ENCODE measurements at regions of chr7 and their contacts with region 1.

Region 1: GRCh38 chr7:23055582-23056178 is 41.8 kb upstream of the HYCC1 start:
- DNase-seq: peak in 1 of 2 donors; percentile 83
- ATAC-seq: peak; percentile 89 to 95 (median 94)
- H3K4me3 ChIP-seq: no peak overlapping the region
- H3K4me3 Mint-ChIP-seq: no peak overlapping the region
- H3K27ac ChIP-seq: no peak overlapping the region
- H3K27ac Mint-ChIP-seq: no peak overlapping the region
- H3K4me1 ChIP-seq: no peaks in the 10 kb centered on the region
- H3K4me1 Mint-ChIP-seq: no peaks in the 10 kb centered on the region
- H3K27me3 ChIP-seq: no peaks in the 10 kb centered on the region
- H3K27me3 Mint-ChIP-seq: peaks cover 6 to 8% of the 10 kb centered on the region in 2 donors
- CTCF ChIP-seq: peak; percentile 95

Region 2: DNA sequence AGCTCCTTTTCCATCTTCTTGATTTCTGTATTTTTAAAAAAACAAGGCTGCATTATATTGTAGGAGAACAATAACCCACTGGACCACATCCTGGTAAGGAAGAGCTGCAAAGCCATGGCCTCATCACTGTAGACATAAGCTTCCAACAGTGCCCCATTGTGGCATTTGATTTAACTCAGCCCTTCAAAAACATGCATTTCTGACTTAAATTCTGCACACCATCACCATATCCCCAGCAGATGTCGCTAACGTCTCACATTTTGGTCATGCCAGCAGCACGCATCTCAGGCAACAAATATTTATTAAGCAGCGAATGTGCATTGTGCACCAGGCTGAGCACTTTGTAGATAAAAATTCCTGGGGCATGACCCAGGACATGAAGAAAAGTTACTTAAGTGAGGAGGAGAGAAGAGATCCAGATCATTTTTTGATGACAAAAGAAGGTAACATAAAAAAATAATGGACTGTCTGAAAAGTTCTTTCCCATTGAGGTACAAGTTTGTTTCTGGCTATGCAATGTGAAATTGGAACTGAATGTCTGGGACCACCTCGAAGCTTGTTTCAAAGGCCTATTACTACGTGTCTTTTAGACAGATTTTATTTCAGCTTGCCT is 945.3 kb before region 1 on chr7:
- intact Hi-C with region 1: loop called (anchors 5 kb)
- DNase-seq: peak; percentile 50 to 88
- ATAC-seq: peak; percentile 80 to 89 (median 82)
- H3K4me3 ChIP-seq: no peak overlapping the region
- H3K4me3 Mint-ChIP-seq: no peak overlapping the region
- H3K27ac ChIP-seq: no peak overlapping the region
- H3K27ac Mint-ChIP-seq: no peak overlapping the region
- H3K4me1 ChIP-seq: no peaks in the 10 kb centered on the region
- H3K4me1 Mint-ChIP-seq: no peaks in the 10 kb centered on the region
- H3K27me3 ChIP-seq: no peaks in the 10 kb centered on the region
- H3K27me3 Mint-ChIP-seq: peaks cover 0 to 9% of the 10 kb centered on the region in 2 donors
- CTCF ChIP-seq: peak; percentile 81

Region 3: GRCh38 chr7:22549667-22550513 is 505.8 kb before region 1 on chr7:
- intact Hi-C with region 1: loop called (anchors 1 kb)
- DNase-seq: peak in 1 of 2 donors; percentile 66
- ATAC-seq: peak in 2 of 3 donors; percentile 41 to 65
- H3K4me3 ChIP-seq: no peak overlapping the region
- H3K4me3 Mint-ChIP-seq: peak overlapping the region; percentile 35
- H3K27ac ChIP-seq: no peak overlapping the region
- H3K27ac Mint-ChIP-seq: no peak overlapping the region
- H3K4me1 ChIP-seq: peaks cover 9% of the 10 kb centered on the region
- H3K4me1 Mint-ChIP-seq: peaks cover 6 to 12% of the 10 kb centered on the region in 2 donors
- H3K27me3 ChIP-seq: peaks cover 18% of the 10 kb centered on the region
- H3K27me3 Mint-ChIP-seq: peaks cover 40 to 66% of the 10 kb centered on the region in 2 donors
- CTCF ChIP-seq: peak; percentile 42

Region 4: DNA sequence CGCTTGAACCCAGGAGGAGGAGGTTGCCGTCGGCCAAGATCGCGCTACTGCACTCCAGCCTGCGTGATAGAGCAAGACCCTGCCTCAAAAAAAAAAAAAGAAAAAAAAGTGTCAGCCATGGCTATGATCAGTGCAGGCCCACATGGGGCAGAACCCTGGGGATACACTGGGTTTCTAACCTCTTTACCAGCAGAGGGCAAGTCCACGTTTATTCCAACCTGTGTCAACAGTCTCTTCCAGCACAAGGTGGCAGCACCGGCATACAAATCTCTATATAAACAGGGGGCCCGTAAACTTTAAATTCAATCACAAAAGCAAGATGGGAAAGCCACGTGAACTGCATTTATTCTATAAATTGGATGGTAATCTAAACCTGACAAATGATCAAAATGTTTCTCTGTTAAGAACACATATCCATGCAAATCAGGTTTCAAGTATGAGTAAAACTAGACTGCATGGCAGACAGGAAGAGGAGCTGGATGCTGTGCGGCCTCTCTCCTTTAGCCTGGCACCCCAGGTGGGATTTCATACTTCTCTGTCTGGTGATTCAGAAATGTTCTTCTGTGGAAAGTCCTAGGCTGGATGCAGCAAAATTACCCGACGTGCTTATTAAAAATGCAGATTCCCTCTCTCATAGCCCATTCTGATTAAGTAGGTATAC is 495.7 kb before region 1 on chr7:
- intact Hi-C with region 1: loop called (anchors 1 kb)
- DNase-seq: peak; percentile 23 to 82
- ATAC-seq: peak; percentile 75 to 86 (median 77)
- H3K4me3 ChIP-seq: no peak overlapping the region
- H3K4me3 Mint-ChIP-seq: no peak overlapping the region
- H3K27ac ChIP-seq: no peak overlapping the region
- H3K27ac Mint-ChIP-seq: no peak overlapping the region
- H3K4me1 ChIP-seq: peaks cover 16% of the 10 kb centered on the region
- H3K4me1 Mint-ChIP-seq: peaks cover 0 to 4% of the 10 kb centered on the region in 2 donors
- H3K27me3 ChIP-seq: peaks cover 12% of the 10 kb centered on the region
- H3K27me3 Mint-ChIP-seq: peaks cover 8 to 23% of the 10 kb centered on the region in 2 donors
- CTCF ChIP-seq: peak; percentile 70

Region 5: GRCh38 chr7:22782616-22783232 is 273.0 kb before region 1 on chr7:
- intact Hi-C with region 1: loop called (anchors 2 kb)
- DNase-seq: peak; percentile 43 to 80
- ATAC-seq: peak; percentile 64 to 89 (median 82)
- H3K4me3 ChIP-seq: no peak overlapping the region
- H3K4me3 Mint-ChIP-seq: no peak overlapping the region
- H3K27ac ChIP-seq: no peak overlapping the region
- H3K27ac Mint-ChIP-seq: no peak overlapping the region
- H3K4me1 ChIP-seq: no peaks in the 10 kb centered on the region
- H3K4me1 Mint-ChIP-seq: no peaks in the 10 kb centered on the region
- H3K27me3 ChIP-seq: no peaks in the 10 kb centered on the region
- H3K27me3 Mint-ChIP-seq: peaks cover 4 to 5% of the 10 kb centered on the region in 2 donors
- CTCF ChIP-seq: peak; percentile 77

Region 6: DNA sequence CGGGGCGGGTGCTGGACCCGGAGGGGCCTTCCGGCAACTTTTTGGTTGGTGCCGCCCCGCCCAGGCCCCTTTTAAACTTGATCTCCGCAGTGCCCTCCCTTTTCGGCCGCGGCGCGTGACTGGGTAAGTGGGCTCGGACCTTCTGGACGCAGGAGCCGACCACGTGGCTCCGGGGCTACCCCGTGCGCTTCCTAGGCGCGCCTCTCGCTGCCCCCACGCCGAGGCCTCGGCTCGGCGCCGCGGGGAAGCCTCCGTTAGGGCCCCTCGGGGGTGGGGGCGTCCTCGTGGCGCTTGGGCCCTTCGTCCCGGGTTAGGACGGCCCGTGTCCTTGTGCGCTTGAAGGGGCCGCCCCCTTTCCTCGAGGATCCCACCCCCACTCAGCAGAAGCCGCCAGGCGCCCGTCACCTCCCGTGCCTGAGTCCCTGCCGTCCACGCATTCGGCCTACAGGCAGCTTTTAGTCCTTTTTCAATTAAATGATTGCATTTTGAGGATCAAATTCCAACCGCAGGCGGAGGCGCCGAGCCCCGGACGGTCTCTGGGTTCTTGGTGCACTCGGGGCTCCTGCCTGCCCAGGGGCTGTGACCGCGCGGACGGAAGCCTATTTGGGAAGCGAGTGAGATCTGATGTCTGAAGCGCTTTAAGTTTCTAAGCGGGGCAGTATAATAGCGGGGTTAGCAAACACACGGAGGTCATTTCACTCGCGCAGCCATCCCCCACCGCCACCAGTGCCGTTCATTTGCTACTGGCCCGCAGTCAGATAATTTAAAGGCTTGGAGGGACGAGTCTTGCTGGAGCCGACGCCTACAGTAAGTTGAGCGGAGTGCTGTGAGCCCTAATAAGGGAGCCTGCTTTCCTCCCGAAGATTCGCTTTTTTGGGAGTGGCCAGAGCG is 201.3 kb before region 1 on chr7:
- intact Hi-C with region 1: loop called (anchors 1 kb)
- DNase-seq: peak; percentile 75 to 89
- ATAC-seq: peak; percentile 87 to 93 (median 88)
- H3K4me3 ChIP-seq: peak overlapping the region; percentile 62
- H3K4me3 Mint-ChIP-seq: peak overlapping the region; percentile 96
- H3K27ac ChIP-seq: peak overlapping the region; percentile 76
- H3K27ac Mint-ChIP-seq: peak overlapping the region; percentile 82 to 93
- H3K4me1 ChIP-seq: peaks cover 20% of the 10 kb centered on the region
- H3K4me1 Mint-ChIP-seq: peaks cover 16 to 20% of the 10 kb centered on the region in 2 donors
- H3K27me3 ChIP-seq: no peaks in the 10 kb centered on the region
- H3K27me3 Mint-ChIP-seq: no peaks in the 10 kb centered on the region
- CTCF ChIP-seq: peak; percentile 91

Region 7: DNA sequence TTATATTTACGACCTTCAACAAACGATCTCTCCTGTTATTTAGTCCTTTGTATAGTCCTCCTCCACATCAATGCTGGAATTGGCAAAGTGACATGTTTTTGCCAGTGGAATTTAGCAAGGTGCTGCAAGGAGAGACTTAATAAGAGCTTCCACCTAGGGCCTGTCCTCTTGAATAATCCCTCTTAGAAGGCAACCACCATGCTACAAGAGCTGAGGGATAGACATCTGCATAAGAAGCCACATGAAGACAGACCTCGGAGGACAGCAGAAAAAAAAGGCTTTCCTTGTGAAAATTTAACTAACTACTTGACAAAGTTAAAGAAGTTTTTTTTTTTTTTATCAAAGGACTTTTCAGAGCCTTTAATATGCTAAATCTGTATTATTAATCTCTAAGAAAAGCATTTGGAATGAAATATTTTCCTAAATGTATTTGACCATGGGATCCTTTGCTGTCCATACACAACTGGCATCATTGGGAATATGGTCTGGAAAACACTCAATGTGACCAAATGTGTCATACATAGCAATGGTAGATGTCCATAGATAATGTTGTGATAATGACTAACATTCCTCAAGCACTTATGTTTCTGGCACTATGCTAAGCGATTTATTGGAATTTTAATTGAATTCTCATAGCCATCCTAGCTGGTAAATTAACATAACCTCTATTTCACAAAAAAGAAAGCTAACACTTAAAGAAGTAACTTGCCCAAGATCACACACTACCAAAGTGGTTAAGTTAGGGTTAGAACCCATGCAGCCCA is 54.9 kb before region 1 on chr7:
- intact Hi-C with region 1: no loop called
- DNase-seq: no peak
- ATAC-seq: no peak
- H3K4me3 ChIP-seq: no peak overlapping the region
- H3K4me3 Mint-ChIP-seq: no peak overlapping the region
- H3K27ac ChIP-seq: no peak overlapping the region
- H3K27ac Mint-ChIP-seq: no peak overlapping the region
- H3K4me1 ChIP-seq: no peaks in the 10 kb centered on the region
- H3K4me1 Mint-ChIP-seq: peaks cover 13 to 37% of the 10 kb centered on the region in 2 donors
- H3K27me3 ChIP-seq: no peaks in the 10 kb centered on the region
- H3K27me3 Mint-ChIP-seq: no peaks in the 10 kb centered on the region
- CTCF ChIP-seq: no peak

Measured in natural killer cell (primary cell).